HepG2 (cell line): ENCODE measurements at regions of chr3 and their contacts with region 1.

Region 1: GRCh38 chr3:53921296-53921695 is 29.6 kb upstream of the SELENOK start:
- DNase-seq: peak; percentile 21
- ATAC-seq: peak; percentile 76
- H3K4me3 ChIP-seq: no peak overlapping the region
- H3K27ac ChIP-seq: no peak overlapping the region
- H3K4me1 ChIP-seq: no peaks in the 10 kb centered on the region
- H3K27me3 ChIP-seq: no peaks in the 10 kb centered on the region
- CTCF ChIP-seq: peak; percentile 61
- EP300 ChIP-seq: no peak
- POLR2A ChIP-seq: no peak
- RAD21 ChIP-seq: no peak

Region 2: GRCh38 chr3:53677413-53677812 is 243.9 kb before region 1 on chr3:
- CTCF ChIA-PET with region 1: interaction called, 6 read pairs
- POLR2A ChIA-PET with region 1: no interaction called
- in situ Hi-C with region 1: no loop called
- intact Hi-C with region 1: loop called (anchors 1 kb)
- DNase-seq: peak; percentile 33
- ATAC-seq: peak; percentile 96
- H3K4me3 ChIP-seq: no peak overlapping the region
- H3K27ac ChIP-seq: no peak overlapping the region
- H3K4me1 ChIP-seq: peaks cover 2% of the 10 kb centered on the region
- H3K27me3 ChIP-seq: no peaks in the 10 kb centered on the region
- CTCF ChIP-seq: peak; percentile 61
- EP300 ChIP-seq: no peak
- POLR2A ChIP-seq: no peak
- RAD21 ChIP-seq: no peak

Region 3: DNA sequence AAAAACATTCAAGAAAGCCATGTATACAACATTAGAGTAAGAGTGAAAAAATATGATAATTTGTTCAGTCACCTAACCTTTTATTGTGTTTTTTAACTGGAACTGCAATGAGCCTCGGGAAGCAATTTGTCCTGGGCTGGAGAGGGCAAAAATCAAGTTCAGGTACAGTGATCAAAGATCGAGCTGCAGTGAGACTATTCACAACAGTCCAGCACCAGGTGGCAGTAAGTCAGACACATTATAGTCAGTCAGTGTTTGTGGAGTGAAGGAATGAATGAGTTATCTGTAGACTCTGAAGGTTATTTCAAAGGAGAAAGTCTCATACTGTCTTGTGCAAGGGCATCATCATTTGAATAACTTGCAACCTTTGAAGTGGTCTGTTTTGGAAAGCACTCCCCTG is 191.7 kb before region 1 on chr3:
- CTCF ChIA-PET with region 1: no interaction called
- POLR2A ChIA-PET with region 1: no interaction called
- in situ Hi-C with region 1: no loop called
- intact Hi-C with region 1: loop called (anchors 1 kb)
- DNase-seq: peak; percentile 56
- ATAC-seq: peak; percentile 98
- H3K4me3 ChIP-seq: no peak overlapping the region
- H3K27ac ChIP-seq: no peak overlapping the region
- H3K4me1 ChIP-seq: peaks cover 17% of the 10 kb centered on the region
- H3K27me3 ChIP-seq: no peaks in the 10 kb centered on the region
- CTCF ChIP-seq: peak; percentile 74
- EP300 ChIP-seq: no peak
- POLR2A ChIP-seq: no peak
- RAD21 ChIP-seq: no peak